Activated naive CD4-positive, alpha-beta T cell treated with anti-CD3 and anti-CD28 coated beads for 36 hours (primary cell): ENCODE measurements at regions of chr3 and their contacts with region 1.

Region 1: DNA sequence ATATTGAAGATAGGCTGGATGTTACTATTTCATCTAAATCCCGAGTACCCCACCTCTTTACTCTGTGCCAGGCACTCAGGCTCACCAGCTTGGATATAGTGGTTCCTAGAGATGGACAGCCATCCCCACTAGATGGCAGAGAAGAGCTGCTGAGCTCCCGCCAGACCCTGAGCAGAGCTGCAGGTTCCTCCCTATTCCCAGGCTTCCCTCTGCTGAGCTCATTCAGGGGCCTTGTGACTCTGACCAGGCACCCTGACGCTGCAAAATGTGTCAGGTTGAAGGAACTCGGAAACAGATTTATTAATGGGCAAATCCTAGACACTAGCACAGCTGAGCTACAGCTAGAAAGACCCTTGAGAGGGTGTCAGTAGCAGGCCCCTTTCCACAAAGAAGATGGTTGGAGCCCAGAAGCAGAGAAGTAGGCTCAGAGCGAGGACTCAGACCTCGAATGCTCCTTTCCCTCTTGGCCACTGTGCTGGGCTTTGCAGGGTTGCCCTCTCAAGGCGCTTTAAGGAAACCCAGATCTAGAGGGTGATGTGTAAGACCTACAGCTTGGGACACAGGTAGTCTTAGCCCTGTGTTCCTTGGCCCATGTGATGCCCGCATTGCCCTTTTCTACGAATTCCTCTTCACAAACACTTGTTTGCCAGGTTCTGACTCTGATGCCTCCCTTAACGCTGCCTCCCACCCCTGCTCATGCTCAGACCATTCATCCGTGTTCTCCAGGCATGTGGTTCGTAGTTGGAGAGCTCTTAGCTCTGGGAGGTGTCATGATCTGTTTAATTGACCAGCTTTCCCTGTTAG is 38.0 kb upstream of the RHO start:
- DNase-seq: peak; percentile 67
- H3K4me3 Mint-ChIP-seq: no peak overlapping the region
- H3K27ac Mint-ChIP-seq: no peak overlapping the region
- H3K4me1 Mint-ChIP-seq: no peaks in the 10 kb centered on the region
- H3K27me3 Mint-ChIP-seq: no peaks in the 10 kb centered on the region

Region 2: DNA sequence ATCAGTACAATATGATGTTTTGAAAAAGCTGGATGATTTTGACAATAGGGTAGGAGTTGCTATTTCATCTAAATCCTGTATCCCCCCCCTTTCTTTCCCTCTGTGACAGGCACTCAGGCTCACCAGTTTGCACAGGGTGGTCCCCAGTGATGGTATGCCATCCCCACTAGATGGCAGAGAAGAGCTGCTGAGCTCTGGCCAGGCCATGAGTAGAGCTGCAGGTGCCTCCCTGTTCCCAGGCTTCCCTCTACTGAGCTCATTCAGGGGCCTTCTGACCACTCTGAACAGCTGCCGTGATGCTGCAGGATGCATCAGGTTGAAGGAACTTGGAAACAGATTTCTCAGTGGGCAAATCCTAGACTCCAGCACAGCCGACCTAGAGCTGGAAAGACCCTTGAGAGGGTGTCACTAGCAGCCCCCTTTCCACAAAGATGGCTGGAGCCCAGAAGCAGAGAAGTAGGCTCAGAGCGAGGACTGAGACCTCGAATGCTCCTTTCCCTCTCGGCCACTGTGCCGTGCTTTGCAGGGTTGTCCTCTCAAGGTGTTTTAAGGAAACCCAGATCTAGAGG is 107.1 kb before region 1 on chr3:
- CTCF ChIA-PET with region 1: interaction called, 15 read pairs
- intact Hi-C with region 1: loop called (anchors 10 kb)
- DNase-seq: peak; percentile 65
- H3K4me3 Mint-ChIP-seq: no peak overlapping the region
- H3K27ac Mint-ChIP-seq: no peak overlapping the region
- H3K4me1 Mint-ChIP-seq: no peaks in the 10 kb centered on the region
- H3K27me3 Mint-ChIP-seq: no peaks in the 10 kb centered on the region